ENCODE measurements at regions of chr17 and their contacts with region 1.

Region 1: DNA sequence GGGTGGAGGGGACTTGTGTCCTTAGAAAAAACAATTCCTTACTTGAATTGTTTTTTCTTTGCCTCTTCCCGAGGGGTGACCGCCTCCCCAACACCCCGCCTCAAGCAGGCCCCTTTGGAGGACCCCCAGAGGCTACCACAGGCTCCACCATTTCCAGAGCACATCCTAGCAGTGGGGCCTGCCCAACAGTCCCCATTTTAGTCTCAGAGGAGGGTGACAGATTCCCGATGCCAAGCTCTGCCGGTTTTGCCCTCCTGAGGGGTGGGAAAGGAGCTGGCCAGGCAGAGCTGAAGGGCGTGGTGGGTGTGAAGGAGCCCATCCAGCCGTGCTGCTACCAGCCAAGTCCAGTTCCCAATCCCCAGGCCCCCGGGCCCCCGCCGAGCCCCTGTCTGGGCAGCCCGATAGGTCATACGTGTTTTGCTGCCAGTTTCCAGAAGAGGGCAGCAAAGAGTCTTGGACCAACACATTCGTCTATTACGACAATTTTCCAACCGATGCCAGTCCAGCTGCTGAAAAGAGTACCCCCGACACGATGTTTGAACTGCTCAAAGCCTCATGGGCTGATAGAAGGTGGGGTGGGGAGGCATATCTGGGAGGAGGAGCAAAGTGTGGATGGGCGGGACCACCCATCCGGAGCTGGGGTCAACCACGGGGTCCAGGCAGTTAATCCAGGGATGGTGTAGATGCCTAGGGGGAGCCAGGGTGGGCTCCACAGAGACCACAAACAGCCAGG is 18.8 kb upstream of the GAA start:
- DNase-seq: peak; percentile 82
- H3K4me3 ChIP-seq: peak overlapping the region in 3 of 4 donors; percentile 1 to 23 (median 3)
- H3K27ac ChIP-seq: no peak overlapping the region
- H3K4me1 ChIP-seq: peaks cover 0 to 8% (median 4%) of the 10 kb centered on the region in 4 donors
- H3K27me3 ChIP-seq: no peaks in the 10 kb centered on the region
- CTCF ChIP-seq: peak; percentile 58 to 77 (median 68)
- EP300 ChIP-seq: no peak
- POLR2A ChIP-seq: no peak

Region 2: GRCh38 chr17:79991140-79991923 is 91.2 kb before region 1 on chr17:
- intact Hi-C with region 1: no loop called
- DNase-seq: peak; percentile 91
- H3K4me3 ChIP-seq: peak overlapping the region; percentile 33 to 56 (median 38)
- H3K27ac ChIP-seq: peak overlapping the region in 3 of 4 donors; percentile 12 to 71 (median 34)
- H3K4me1 ChIP-seq: peaks cover 3 to 65% (median 56%) of the 10 kb centered on the region in 4 donors
- H3K27me3 ChIP-seq: no peaks in the 10 kb centered on the region
- CTCF ChIP-seq: peak in 1 of 4 experiments; percentile 73
- EP300 ChIP-seq: no peak
- POLR2A ChIP-seq: no peak

Region 3: DNA sequence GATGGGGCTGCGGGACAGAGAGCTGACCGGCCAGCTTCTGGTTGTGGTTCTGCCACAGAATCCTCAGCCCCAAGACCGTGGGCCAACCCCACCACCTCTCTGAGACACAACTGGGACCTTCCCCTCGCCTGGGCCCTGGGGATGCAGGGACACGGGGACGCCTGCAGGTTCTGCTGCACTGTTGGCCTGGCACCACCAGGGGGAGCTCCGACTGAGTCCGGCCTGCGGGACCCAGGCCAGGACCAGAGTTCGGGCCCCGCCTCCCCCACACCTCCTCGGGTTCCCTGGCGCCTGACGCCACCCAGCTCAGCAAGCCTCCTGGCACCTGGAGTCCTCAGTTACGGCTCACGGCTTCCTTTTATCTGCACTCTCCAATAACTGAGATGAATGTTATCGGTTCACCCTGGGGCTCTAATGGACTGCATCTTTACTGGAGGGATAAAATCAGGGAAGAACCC is 74.2 kb before region 1 on chr17:
- intact Hi-C with region 1: loop called (anchors 5 kb)
- DNase-seq: peak; percentile 90
- H3K4me3 ChIP-seq: no peak overlapping the region
- H3K27ac ChIP-seq: no peak overlapping the region
- H3K4me1 ChIP-seq: peaks cover 0 to 17% (median 12%) of the 10 kb centered on the region in 4 donors
- H3K27me3 ChIP-seq: no peaks in the 10 kb centered on the region
- CTCF ChIP-seq: peak; percentile 84 to 93 (median 90)
- EP300 ChIP-seq: no peak
- POLR2A ChIP-seq: no peak